Natural killer cell (primary cell): ENCODE measurements at regions of chr19 and their contacts with region 1.

Region 1: DNA sequence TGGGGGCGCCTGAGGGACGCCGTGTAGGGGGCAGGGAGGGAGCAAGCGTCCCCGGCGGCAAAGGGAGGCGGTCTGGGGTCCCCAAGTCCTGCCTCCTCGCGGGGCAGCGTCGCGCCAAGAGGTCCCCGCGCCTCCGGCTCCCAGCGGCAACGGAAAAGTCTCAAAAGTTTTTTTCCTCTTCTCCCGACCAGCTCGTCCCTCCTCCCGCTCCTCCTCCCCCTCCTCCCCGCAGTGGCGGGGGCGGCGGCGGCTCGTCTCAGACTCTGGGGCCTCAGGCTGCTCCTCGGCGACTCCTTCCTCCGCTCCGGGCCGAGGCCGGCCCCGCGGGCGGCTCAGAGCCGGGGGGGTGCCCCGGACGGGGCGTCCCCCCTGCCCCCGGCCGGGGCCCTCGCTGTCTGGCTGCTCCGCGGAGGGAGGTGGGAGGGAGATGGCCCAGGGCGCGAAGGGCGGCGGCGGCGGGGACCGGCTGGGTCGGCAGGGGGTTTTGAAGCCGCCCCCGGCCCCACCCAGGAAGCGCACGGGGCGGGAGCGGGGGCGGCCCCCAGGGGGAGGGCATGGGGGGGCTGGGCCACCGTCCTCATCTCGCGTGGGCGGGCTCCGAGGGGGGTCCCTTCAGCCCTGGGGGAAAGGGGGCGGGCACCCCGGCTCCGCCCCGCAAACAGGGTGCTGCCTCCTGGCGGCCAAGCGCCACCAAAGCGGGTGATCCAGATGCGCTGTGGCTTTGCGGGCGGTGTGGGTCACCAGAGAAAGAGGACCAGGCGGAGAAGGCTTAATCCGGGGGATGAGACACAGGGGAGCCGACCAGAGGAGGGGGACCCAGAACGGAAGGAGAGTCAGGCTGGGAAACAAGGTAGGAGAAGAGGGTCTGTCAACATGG is at the start of gene TGFB1:
- DNase-seq: peak; percentile 92 to 97
- ATAC-seq: peak; percentile 64 to 88 (median 68)
- H3K4me3 ChIP-seq: peak within 1 kb of the TSS; percentile 90
- H3K4me3 Mint-ChIP-seq: peak within 1 kb of the TSS; percentile 93
- H3K27ac ChIP-seq: peak within 1 kb of the TSS; percentile 90
- H3K27ac Mint-ChIP-seq: peak within 1 kb of the TSS; percentile 90 to 96
- H3K4me1 ChIP-seq: peaks cover 66% of the 10 kb centered on the region
- H3K4me1 Mint-ChIP-seq: peaks cover 56 to 76% of the 10 kb centered on the region in 2 donors
- H3K27me3 ChIP-seq: no peaks in the 10 kb centered on the region
- H3K27me3 Mint-ChIP-seq: peaks cover 0 to 2% of the 10 kb centered on the region in 2 donors
- CTCF ChIP-seq: peak; percentile 84
- total RNA-seq, gene TGFB1: 682 to 761 (median 729) TPM

Region 2: GRCh38 chr19:41206926-41207750 is 146.6 kb before region 1 on chr19:
- intact Hi-C with region 1: loop called (anchors 2 kb)
- DNase-seq: no peak
- ATAC-seq: no peak
- H3K4me3 ChIP-seq: no peak overlapping the region
- H3K4me3 Mint-ChIP-seq: no peak overlapping the region
- H3K27ac ChIP-seq: no peak overlapping the region
- H3K27ac Mint-ChIP-seq: no peak overlapping the region
- H3K4me1 ChIP-seq: no peaks in the 10 kb centered on the region
- H3K4me1 Mint-ChIP-seq: peaks cover 4 to 10% of the 10 kb centered on the region in 2 donors
- H3K27me3 ChIP-seq: no peaks in the 10 kb centered on the region
- H3K27me3 Mint-ChIP-seq: no peaks in the 10 kb centered on the region
- CTCF ChIP-seq: no peak

Region 3: DNA sequence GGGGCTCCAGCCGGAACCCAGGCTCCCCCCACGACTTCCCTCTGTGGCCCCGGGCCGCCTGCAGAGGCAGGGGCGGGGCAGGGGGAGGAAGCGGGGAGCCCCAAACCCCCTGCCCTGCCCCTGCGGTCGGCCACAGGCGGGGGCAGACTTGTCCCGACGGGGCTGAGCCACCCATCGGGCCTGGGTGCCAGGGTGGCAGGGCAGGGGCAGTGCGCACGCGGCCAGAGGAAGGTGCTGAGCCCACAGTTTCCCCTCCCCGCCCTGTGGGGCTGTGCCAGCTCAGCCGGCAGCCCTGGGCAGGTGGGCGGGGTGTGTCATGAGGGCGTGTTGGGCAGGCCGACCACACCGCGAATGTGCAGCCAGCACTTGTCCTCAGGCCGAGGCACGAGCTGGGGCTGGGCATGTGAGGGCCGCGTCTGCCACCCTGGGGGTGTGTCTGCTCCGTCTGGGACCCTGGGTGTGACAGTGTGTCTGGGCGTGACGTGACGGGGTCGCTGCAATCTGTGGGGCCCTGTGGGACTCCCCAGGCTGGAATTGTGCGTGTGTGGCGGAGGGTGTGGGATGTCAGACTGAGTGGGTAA is 26.0 kb before region 1 on chr19:
- intact Hi-C with region 1: loop called (anchors 1 kb)
- DNase-seq: peak; percentile 89 to 96
- ATAC-seq: peak; percentile 46 to 78 (median 61)
- H3K4me3 ChIP-seq: peak overlapping the region; percentile 25
- H3K4me3 Mint-ChIP-seq: peak overlapping the region; percentile 80
- H3K27ac ChIP-seq: peak overlapping the region; percentile 91
- H3K27ac Mint-ChIP-seq: peak overlapping the region; percentile 94 to 97
- H3K4me1 ChIP-seq: peaks cover 98% of the 10 kb centered on the region
- H3K4me1 Mint-ChIP-seq: peaks cover 83 to 88% of the 10 kb centered on the region in 2 donors
- H3K27me3 ChIP-seq: no peaks in the 10 kb centered on the region
- H3K27me3 Mint-ChIP-seq: no peaks in the 10 kb centered on the region
- CTCF ChIP-seq: no peak

Region 4: GRCh38 chr19:41363753-41364523 is 10.2 kb after region 1 on chr19 and contains the start of gene B9D2:
- intact Hi-C with region 1: loop called (anchors 1 kb)
- DNase-seq: peak; percentile 96 to 99
- ATAC-seq: peak; percentile 89 to 97 (median 92)
- H3K4me3 ChIP-seq: peak within 1 kb of the TSS; percentile 93
- H3K4me3 Mint-ChIP-seq: peak within 1 kb of the TSS; percentile 89
- H3K27ac ChIP-seq: peak within 1 kb of the TSS; percentile 99
- H3K27ac Mint-ChIP-seq: peak within 1 kb of the TSS; percentile 98
- H3K4me1 ChIP-seq: peaks cover 18% of the 10 kb centered on the region
- H3K4me1 Mint-ChIP-seq: peaks cover 17 to 22% of the 10 kb centered on the region in 2 donors
- H3K27me3 ChIP-seq: no peaks in the 10 kb centered on the region
- H3K27me3 Mint-ChIP-seq: no peaks in the 10 kb centered on the region
- CTCF ChIP-seq: no peak
- total RNA-seq, gene B9D2: 18.1 to 22.2 (median 18.7) TPM

Region 5: GRCh38 chr19:41397086-41398049 is 43.7 kb after region 1 on chr19 and contains the starts of genes BCKDHA and EXOSC5:
- intact Hi-C with region 1: loop called (anchors 1 kb)
- DNase-seq: peak; percentile 97 to 100
- ATAC-seq: peak; percentile 96 to 100 (median 98)
- H3K4me3 ChIP-seq: peak within 1 kb of the TSS; percentile 94
- H3K4me3 Mint-ChIP-seq: peak within 1 kb of the TSS; percentile 97
- H3K27ac ChIP-seq: peak within 1 kb of the TSS; percentile 95
- H3K27ac Mint-ChIP-seq: peak within 1 kb of the TSS; percentile 99 to 100
- H3K4me1 ChIP-seq: peaks cover 29% of the 10 kb centered on the region
- H3K4me1 Mint-ChIP-seq: peaks cover 38 to 45% of the 10 kb centered on the region in 2 donors
- H3K27me3 ChIP-seq: no peaks in the 10 kb centered on the region
- H3K27me3 Mint-ChIP-seq: no peaks in the 10 kb centered on the region
- CTCF ChIP-seq: no peak
- total RNA-seq, gene BCKDHA: 26.5 to 29.0 (median 28.3) TPM
- total RNA-seq, gene EXOSC5: 9.0 to 11.6 (median 9.5) TPM